ENCODE measurements at regions of chr20 and their contacts with region 1.

Region 1: DNA sequence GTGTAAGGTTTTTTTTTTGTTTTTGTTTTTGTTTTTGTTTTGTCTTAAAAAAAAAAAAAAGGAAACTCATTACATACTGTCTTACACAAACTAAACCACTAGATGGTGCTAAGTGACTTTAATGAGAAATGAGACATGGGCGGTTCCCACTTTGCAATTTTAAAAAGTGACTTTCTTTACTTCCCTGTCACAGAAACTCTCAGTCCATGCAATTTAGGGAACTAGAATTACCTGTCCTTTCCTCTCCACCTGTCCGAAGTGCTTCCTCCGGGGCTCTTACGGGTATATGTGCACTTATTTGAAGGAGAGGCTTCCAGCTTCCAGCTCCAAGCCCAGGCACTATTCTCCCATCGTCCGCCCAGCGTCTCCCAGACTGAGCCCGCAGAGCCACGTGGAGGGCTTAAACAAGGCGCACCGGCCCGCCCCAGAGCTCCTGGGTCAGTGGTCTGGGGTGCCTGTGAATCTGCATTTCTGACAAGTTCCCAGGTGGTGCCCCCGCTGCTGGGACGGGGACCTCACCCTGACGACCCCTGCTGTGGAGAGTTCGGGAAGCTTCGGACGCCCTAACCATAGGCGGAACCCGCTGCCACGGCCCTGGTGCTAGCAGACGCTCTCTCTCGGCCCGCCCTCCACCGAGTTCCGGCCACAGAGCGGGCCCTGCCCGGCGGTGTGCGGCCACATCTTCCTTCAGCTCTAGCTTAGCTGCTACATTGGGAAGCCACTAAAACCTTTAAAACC is 26.1 kb downstream of the BFSP1 start:
- DNase-seq: peak; percentile 64
- CTCF ChIP-seq: peak; percentile 47

Region 2: GRCh38 chr20:16904750-16905149 is 600.3 kb before region 1 on chr20:
- in situ Hi-C with region 1: no loop called
- DNase-seq: no peak
- CTCF ChIP-seq: no peak

Region 3: DNA sequence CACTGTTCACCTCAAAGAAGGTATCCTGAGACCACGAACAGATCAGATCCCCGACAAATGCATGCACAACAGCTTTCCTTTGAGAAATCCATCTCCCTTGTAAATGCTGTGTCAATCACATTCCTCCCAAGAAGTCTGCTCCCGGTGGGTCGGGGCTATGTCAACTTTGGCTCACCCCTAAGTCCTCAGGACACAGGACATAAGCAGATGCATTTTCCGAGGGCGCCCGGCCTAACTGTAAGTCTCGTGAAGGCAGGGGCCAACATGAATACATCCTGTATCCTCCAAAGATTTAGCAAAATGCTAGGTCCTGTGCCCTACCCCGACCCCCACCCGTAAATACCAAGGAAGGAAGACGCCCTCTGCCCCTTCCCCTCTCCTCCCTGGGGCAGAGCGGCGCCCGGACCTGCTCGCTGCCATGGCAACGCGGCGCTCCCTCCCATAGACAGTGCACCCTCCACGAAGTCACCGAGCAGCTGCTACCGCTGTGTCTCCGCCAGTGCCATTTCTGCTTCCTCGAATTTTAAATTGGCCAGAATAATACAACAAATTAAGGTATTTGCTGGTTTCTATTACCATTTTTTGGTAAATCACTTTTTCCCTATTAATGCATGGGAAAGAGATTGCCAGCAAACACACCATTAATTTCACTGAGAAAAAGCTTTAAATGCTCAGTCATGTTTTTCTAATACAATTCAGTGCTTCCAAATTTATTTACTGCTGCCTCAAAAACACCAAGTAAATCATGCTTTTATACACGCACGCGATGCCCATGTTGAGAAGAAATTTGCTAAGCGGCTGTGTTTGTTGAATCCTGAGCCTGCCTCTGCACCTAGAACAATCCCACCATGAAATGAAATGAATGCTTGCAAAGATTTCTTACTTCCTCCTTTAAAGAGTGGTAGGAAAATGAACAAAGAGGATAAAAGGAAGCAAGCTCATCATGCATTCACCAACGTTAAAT is 177.6 kb before region 1 on chr20:
- in situ Hi-C with region 1: no loop called
- DNase-seq: no peak
- CTCF ChIP-seq: no peak

Region 4: DNA sequence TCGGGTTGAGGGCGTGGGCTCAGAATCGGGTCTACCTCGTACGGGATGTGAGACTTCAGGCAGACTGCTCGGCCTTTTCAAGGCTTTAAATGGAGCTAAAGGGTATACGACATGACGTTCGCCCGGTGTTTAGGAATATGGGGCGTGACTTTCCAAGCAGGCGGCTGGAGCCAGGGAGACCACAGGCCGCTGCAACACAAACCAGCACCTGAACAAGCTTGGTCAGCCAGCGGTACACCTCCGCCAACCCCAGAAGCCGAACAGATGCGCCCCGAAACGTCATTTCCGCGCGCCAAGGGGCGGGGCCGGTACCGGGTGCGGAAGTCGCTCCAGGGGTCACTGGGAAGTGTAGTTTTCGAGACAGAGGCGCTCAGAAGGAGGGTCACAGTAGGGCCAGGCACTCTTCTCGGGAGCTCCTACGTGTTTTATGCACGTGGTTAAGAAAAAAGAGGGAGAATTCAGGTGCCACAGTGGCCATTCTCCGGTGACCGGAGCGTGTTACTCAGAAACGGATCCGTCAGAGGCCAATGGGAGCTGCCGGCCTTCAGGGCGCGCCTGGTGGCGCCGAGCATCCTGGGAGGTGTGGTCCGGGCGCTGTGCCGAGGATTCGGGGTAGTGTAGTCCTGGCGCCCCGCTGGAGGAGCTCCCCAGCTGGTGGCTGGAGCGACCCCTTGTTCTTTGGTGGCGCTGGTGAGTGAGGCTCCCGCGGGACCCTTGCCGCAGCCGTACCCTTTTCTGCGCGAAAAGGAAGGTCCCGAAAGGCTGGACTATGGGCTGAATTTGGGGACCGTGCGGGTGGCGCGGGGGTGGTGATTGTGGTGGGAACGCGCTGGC is 783.1 kb after region 1 on chr20 and contains the start of gene ZNF133:
- in situ Hi-C with region 1: loop called (anchors 25 kb)
- DNase-seq: peak; percentile 89
- CTCF ChIP-seq: peak; percentile 14

Region 5: GRCh38 chr20:18956900-18957602 is 1452.0 kb after region 1 on chr20:
- in situ Hi-C with region 1: no loop called
- DNase-seq: no peak
- CTCF ChIP-seq: no peak